HAP-1 (cell line): ENCODE measurements at regions of chr11 and their contacts with region 1.

Region 1: GRCh38 chr11:19553683-19554333 is 158.8 kb upstream of the NAV2 start:
- DNase-seq: peak; percentile 33 to 86
- H3K4me3 ChIP-seq: no peak overlapping the region
- H3K4me1 ChIP-seq: no peaks in the 10 kb centered on the region
- H3K27me3 ChIP-seq: peaks cover 4% of the 10 kb centered on the region

Region 2: GRCh38 chr11:19071255-19071654 is 482.6 kb before region 1 on chr11:
- in situ Hi-C with region 1: loop called (anchors 5 kb)
- DNase-seq: peak; percentile 84 to 89
- H3K4me3 ChIP-seq: no peak overlapping the region
- H3K4me1 ChIP-seq: no peaks in the 10 kb centered on the region
- H3K27me3 ChIP-seq: no peaks in the 10 kb centered on the region

Region 3: GRCh38 chr11:19259487-19260345 is 294.1 kb before region 1 on chr11:
- in situ Hi-C with region 1: loop called (anchors 10 kb)
- DNase-seq: peak; percentile 54 to 81
- H3K4me3 ChIP-seq: no peak overlapping the region
- H3K4me1 ChIP-seq: no peaks in the 10 kb centered on the region; the same call in 1 of the 2 replicates
- H3K27me3 ChIP-seq: no peaks in the 10 kb centered on the region

Region 4: DNA sequence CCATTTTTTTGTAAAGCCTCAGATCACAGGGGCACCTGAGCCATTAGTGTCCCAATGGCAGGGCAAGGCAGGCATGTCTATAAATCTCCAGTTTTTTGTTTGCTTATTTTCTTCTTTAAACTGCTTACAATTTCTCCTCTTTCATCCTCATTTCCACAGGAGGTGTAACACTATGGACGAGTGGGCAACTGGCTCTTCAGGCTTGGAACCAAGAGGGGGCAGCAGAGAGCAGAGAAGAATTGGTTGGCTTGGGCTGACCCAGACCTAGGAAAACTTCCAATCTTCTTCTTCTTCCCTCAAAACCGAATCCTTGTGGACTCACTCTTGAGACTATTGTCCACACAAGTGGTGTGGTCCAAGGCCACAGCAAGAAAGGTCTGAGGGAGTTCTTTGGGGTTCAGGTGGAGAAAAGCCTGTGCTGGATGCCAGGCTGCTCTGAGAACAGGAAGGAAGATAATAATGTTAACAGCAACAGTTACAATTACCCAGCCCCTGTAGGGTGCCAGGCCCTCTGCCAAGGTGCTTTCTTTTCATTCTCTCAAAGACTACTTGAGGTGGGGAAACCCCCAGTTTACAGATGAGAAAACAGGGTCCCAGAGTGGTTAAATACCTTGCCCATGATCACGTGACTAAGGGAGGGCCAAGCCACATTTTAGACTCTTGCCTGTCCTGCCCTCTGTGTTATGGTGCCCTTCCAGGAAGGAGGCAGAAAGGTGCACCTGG is 242.3 kb before region 1 on chr11:
- in situ Hi-C with region 1: loop called (anchors 5 kb)
- DNase-seq: peak; percentile 29 to 85
- H3K4me3 ChIP-seq: no peak overlapping the region
- H3K4me1 ChIP-seq: no peaks in the 10 kb centered on the region
- H3K27me3 ChIP-seq: peaks cover 9% of the 10 kb centered on the region

Region 5: DNA sequence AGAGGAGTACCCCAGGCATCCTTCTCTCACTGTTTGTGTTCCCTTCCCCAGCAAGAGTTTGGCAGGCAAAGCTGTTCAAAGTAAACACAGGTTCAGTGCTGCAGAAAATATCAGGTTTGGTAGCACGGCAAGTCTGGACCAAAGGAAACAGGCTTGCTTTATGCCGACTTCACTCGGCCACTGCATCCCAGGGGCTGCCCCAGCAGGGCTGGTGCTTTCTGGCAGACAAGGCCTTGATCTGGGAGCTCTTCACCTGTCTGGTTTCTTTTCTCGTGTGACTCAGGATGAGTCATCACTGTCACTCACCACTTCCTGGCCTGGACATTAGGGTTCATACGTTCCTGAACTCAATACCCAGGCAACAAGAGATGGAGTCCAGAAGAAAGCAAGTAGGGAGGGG is 106.3 kb after region 1 on chr11:
- in situ Hi-C with region 1: no loop called
- DNase-seq: no peak
- H3K4me3 ChIP-seq: no peak overlapping the region
- H3K4me1 ChIP-seq: no peaks in the 10 kb centered on the region
- H3K27me3 ChIP-seq: peaks cover 8% of the 10 kb centered on the region; the same call in 1 of the 2 replicates

Region 6: GRCh38 chr11:20127671-20128527 is 574.1 kb after region 1 on chr11:
- in situ Hi-C with region 1: loop called (anchors 25 kb)
- DNase-seq: peak; percentile 44 to 90
- H3K4me3 ChIP-seq: no peak overlapping the region
- H3K4me1 ChIP-seq: no peaks in the 10 kb centered on the region
- H3K27me3 ChIP-seq: 0 out of 2 replicates have a peak, but pooled peaks cover 6% of the 10 kb centered on the region